Ovary (tissue), 10 donors: ENCODE measurements at regions of chr16 and their contacts with region 1.

Region 1: GRCh38 chr16:81737885-81738786 is 41.0 kb upstream of the PLCG2 start:
- DNase-seq: peak; percentile 63 to 81 (median 77)
- H3K4me3 ChIP-seq: no peak overlapping the region
- H3K27ac ChIP-seq: no peak overlapping the region
- H3K4me1 ChIP-seq: peaks cover 2% of the 10 kb centered on the region
- H3K27me3 ChIP-seq: no peaks in the 10 kb centered on the region
- CTCF ChIP-seq: peak; percentile 32 to 82 (median 81)
- EP300 ChIP-seq: no peak
- POLR2A ChIP-seq: no peak

Region 2: DNA sequence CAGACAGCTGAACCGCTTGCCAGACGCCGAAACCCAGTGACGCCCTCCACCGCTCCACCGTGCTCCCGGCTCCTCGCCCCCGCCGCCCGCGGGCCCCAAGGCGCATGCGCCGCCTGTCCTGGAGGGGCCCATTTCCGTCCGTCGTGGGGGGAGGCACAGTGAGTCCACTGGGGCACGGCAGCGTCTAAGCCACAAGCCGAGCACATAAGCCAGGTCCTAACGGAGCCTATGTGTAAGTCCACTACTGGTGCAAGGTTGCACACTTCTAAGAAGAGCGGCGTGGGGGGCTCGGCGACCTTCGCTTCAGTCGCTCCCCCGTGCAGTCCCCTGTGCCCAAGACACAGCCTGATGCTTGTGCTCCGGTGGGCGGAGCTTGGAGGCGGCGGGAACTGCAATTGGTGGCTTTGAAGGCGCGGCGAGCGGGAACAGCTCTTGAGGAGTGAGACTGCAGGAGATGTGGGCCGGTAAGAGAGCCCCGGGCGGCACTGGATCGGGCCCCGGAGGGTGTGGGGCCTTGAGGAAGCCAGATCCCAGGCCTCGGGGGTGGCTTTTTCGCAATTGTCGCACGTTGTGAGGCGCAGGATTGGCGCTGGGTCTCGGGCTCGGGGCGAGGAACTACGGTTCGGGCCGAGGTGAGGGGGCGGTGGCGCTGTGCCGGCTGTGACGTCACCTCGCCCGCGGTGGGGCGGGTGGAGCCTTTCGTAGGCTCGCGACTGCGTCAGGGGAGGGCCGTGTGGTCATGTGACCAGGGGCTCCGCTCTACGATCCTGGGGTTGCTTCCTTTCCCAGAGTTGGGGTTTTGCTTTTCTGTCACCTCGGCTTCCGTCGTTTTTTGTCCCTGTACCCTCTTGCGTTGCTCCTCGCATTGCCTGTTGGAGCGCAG is 731.1 kb before region 1 on chr16 and contains the starts of genes CENPN and CMC2:
- intact Hi-C with region 1: loop called in 1 of 4 experiments (anchors 10 kb)
- DNase-seq: peak; percentile 99 to 100 (median 99)
- H3K4me3 ChIP-seq: peak within 1 kb of the TSS; percentile 81
- H3K27ac ChIP-seq: peak within 1 kb of the TSS; percentile 94 to 98
- H3K4me1 ChIP-seq: peaks cover 9% of the 10 kb centered on the region
- H3K27me3 ChIP-seq: no peaks in the 10 kb centered on the region
- CTCF ChIP-seq: peak in 2 of 3 donors; percentile 21 to 28
- EP300 ChIP-seq: peak; percentile 75
- POLR2A ChIP-seq: peak; percentile 90
- total RNA-seq, gene CENPN: 1.4 to 4.0 (median 2.8) TPM
- total RNA-seq, gene CMC2: 19.1 to 41.1 (median 25.9) TPM

Region 3: GRCh38 chr16:81204798-81205680 is 533.1 kb before region 1 on chr16:
- intact Hi-C with region 1: loop called in 1 of 4 experiments (anchors 10 kb)
- DNase-seq: peak in 3 of 5 donors; percentile 38 to 66 (median 60)
- H3K4me3 ChIP-seq: no peak overlapping the region
- H3K27ac ChIP-seq: no peak overlapping the region
- H3K4me1 ChIP-seq: no peaks in the 10 kb centered on the region
- H3K27me3 ChIP-seq: no peaks in the 10 kb centered on the region
- CTCF ChIP-seq: peak; percentile 31 to 71 (median 60)
- EP300 ChIP-seq: no peak
- POLR2A ChIP-seq: no peak